ENCODE measurements at regions of chr9 and their contacts with region 1.

Region 1: GRCh38 chr9:110638381-110638954 is 30.1 kb upstream of the MUSK start:
- DNase-seq: peak; percentile 50
- H3K4me3 Mint-ChIP-seq: no peak overlapping the region
- H3K27ac Mint-ChIP-seq: no peak overlapping the region
- H3K4me1 Mint-ChIP-seq: peaks cover 5% of the 10 kb centered on the region
- H3K27me3 Mint-ChIP-seq: no peaks in the 10 kb centered on the region
- CTCF ChIP-seq: peak; percentile 47

Region 2: DNA sequence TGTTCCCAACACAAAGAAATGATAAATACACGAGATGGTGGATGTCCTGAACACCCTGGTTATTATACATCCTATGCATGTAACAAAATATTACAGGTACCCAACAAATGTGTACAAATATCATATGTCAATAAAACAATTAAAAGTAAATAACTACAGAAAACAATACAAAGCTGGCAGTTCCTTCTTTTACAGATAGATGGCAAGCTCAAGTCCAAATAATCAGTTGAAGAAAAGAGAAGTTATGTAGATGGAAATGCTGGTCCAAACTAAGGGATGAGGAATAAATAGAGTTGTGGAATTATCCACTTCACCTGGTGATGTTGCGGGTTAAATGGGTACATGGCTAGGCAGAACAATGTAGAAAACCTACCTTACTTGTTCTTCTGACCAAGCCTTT is 779.0 kb before region 1 on chr9:
- CTCF ChIA-PET with region 1: no interaction called
- POLR2A ChIA-PET with region 1: no interaction called
- intact Hi-C with region 1: no loop called
- DNase-seq: no peak
- H3K4me3 Mint-ChIP-seq: no peak overlapping the region
- H3K27ac Mint-ChIP-seq: no peak overlapping the region
- H3K4me1 Mint-ChIP-seq: peaks cover 4% of the 10 kb centered on the region
- H3K27me3 Mint-ChIP-seq: no peaks in the 10 kb centered on the region
- CTCF ChIP-seq: no peak

Region 3: GRCh38 chr9:111037381-111038305 is 399.2 kb after region 1 on chr9:
- CTCF ChIA-PET with region 1: no interaction called
- POLR2A ChIA-PET with region 1: no interaction called
- intact Hi-C with region 1: loop called (anchors 5 kb)
- DNase-seq: peak; percentile 26
- H3K4me3 Mint-ChIP-seq: peak overlapping the region; percentile 68
- H3K27ac Mint-ChIP-seq: peak overlapping the region; percentile 65
- H3K4me1 Mint-ChIP-seq: peaks cover 18% of the 10 kb centered on the region
- H3K27me3 Mint-ChIP-seq: no peaks in the 10 kb centered on the region
- CTCF ChIP-seq: no peak

Region 4: DNA sequence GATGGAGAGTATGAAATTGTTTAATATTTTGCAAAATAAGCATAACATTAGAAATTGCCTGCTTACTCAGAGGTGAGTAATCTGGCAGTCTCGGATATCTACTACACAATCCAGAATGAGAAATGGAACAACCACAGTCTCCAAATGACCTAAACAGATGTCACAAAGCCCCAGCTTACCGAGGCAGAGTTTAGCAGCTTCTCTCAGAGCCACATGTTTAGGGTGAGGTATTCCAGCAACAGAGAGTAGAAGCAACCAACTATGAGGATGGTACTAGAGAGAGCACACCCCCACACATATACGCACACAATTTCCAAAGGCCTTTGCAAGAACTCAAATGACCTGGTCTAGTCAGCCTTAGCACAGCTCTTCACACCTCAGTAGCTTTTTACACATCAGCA is 522.5 kb after region 1 on chr9:
- CTCF ChIA-PET with region 1: no interaction called
- POLR2A ChIA-PET with region 1: no interaction called
- intact Hi-C with region 1: loop called (anchors 5 kb)
- DNase-seq: peak; percentile 47
- H3K4me3 Mint-ChIP-seq: no peak overlapping the region
- H3K27ac Mint-ChIP-seq: peak overlapping the region; percentile 40
- H3K4me1 Mint-ChIP-seq: peaks cover 10% of the 10 kb centered on the region
- H3K27me3 Mint-ChIP-seq: no peaks in the 10 kb centered on the region
- CTCF ChIP-seq: no peak

Region 5: DNA sequence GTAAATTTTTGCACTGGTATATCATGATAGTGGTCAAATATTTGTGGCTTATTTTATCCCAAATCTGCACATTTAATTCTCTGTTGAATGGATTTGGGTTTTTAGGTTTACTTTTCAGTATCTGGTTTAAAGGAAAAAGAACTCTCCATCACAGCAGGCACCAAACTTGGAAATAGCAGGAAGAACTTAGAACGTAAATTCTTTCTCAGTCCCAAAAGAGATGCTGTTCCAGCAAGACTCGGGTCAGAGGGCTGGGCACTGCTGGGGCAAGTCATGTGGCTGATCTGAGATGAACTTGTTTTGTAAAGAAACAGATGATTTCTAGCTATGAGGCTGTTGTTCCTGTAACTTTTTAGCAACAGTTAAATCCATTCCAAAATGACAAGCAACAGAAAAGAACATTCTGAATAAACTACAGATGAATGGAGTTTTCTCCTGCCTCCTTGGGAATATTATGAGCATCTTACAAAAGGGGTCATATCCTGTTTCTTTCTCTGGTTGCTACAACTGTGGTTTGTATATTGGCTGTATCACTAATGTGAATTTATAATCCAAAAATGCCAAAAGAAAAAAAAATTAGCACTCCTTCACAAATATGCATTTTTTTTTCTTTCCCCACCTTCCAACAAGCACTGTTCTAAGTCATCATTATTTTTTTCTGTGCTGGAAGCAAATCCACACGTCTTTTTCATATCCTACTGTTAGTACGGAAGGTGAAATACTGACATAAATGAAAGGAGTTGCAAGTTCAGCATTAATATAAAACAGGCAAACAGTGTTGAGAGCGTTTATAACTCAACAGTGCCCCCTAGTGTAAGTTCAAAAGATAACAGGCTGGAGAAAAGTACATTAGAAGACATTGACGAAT is 660.5 kb after region 1 on chr9:
- CTCF ChIA-PET with region 1: interaction called, 8 read pairs
- POLR2A ChIA-PET with region 1: interaction called, 4 read pairs
- intact Hi-C with region 1: loop called (anchors 1 kb)
- DNase-seq: peak; percentile 67
- H3K4me3 Mint-ChIP-seq: no peak overlapping the region
- H3K27ac Mint-ChIP-seq: no peak overlapping the region
- H3K4me1 Mint-ChIP-seq: peaks cover 6% of the 10 kb centered on the region
- H3K27me3 Mint-ChIP-seq: no peaks in the 10 kb centered on the region
- CTCF ChIP-seq: peak; percentile 70

Measured in MCF 10A (cell line).